ENCODE measurements at regions of chr4 and their contacts with region 1.

Region 1: DNA sequence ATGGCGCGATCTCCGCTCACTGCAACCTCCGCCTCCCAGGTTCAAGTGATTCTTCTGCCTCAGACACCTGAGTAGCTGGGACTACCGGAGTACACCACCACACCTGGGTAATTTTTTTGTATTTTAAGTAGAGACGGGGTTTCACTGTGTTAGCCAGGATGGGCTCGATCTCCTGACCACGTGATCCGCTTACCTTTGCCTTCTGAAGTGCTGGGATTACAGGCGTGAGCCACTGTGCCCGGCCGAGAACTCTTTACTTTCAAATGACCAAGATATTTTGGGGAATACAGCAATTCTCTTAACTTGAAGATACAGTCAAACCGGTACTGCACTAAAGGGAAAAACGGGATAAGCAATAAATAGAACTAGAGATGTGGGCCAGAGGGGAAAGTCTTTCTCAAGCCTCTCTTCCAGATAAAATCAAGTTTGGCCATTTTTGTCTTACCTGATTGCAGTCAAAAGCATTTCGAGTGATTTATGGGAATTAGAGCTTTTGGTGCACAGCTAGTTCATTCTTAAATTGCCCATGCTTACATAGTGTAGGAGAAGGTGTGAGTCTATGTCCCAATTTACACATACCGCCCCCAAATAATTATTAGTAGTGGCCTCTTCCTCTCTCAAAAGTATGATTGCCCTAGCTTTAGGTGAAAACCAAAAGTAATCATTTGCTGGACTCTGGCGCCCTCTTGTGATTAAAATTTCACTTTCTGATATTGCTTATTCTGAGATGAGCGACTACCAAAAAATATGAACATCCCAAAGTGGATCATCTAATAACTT is 53.2 kb upstream of the ABCG2 start:
- DNase-seq: no peak
- H3K4me3 ChIP-seq: no peak overlapping the region
- H3K27ac ChIP-seq: no peak overlapping the region
- H3K4me1 ChIP-seq: peaks cover 0 to 4% (median 0%) of the 10 kb centered on the region in 4 donors
- H3K27me3 ChIP-seq: no peaks in the 10 kb centered on the region
- CTCF ChIP-seq: peak; percentile 68 to 83

Region 2: GRCh38 chr4:87543835-87544461 is 667.7 kb before region 1 on chr4:
- intact Hi-C with region 1: loop called (anchors 10 kb)
- DNase-seq: peak in 1 of 2 donors; percentile 35
- H3K4me3 ChIP-seq: no peak overlapping the region
- H3K27ac ChIP-seq: no peak overlapping the region
- H3K4me1 ChIP-seq: peaks cover 0 to 40% (median 3%) of the 10 kb centered on the region in 4 donors
- H3K27me3 ChIP-seq: no peaks in the 10 kb centered on the region
- CTCF ChIP-seq: peak; percentile 70

Region 3: DNA sequence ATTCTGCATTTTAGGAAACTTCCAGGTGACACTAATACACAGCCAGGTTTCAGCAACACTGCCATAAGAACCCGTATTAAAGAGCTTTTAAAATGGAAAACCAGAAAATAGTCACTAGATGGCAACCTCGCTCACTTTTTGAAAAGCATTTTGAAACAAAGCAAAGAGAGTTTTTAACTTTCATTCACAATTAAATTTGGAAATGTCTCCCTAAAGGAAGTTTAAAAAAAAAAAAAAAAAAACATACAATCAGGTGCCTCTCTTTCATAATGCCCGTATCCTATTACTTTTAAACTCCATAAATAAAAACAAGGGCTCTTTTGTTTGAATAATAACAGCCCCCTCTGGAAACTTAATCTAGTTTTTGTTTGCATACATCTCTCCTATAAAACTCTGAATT is 358.6 kb before region 1 on chr4:
- intact Hi-C with region 1: loop called (anchors 2 kb)
- DNase-seq: no peak
- H3K4me3 ChIP-seq: no peak overlapping the region
- H3K27ac ChIP-seq: no peak overlapping the region
- H3K4me1 ChIP-seq: no peaks in the 10 kb centered on the region
- H3K27me3 ChIP-seq: no peaks in the 10 kb centered on the region
- CTCF ChIP-seq: peak; percentile 46 to 65

Region 4: DNA sequence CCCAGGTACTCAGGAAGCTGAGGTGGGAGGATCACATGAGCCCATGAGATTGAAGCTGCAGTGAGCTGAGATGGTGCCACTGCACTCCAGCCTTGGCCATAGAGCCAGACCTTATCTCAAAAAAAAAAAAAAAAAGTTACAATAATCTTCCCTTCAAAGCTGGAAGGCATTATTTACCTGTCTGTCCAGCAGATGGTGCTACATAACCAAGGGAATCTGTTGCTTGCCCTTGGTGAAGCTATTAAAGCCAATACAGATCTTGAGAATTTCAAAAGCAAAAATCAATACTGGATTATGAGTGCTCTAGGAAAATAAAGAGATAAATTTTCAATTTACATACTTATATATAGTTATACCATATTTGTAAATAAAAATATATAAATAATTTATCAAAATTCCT is 178.4 kb before region 1 on chr4:
- intact Hi-C with region 1: loop called (anchors 5 kb)
- DNase-seq: no peak
- H3K4me3 ChIP-seq: no peak overlapping the region
- H3K27ac ChIP-seq: no peak overlapping the region
- H3K4me1 ChIP-seq: peaks cover 0 to 9% (median 3%) of the 10 kb centered on the region in 4 donors
- H3K27me3 ChIP-seq: no peaks in the 10 kb centered on the region
- CTCF ChIP-seq: peak; percentile 48 to 55

Region 5: GRCh38 chr4:88456757-88457306 is 245.2 kb after region 1 on chr4 and contains the start of gene HERC5:
- intact Hi-C with region 1: loop called (anchors 5 kb)
- DNase-seq: peak; percentile 90 to 96
- H3K4me3 ChIP-seq: peak within 1 kb of the TSS; percentile 93 to 97
- H3K27ac ChIP-seq: peak within 1 kb of the TSS; percentile 88 to 90
- H3K4me1 ChIP-seq: peaks cover 0 to 5% (median 2%) of the 10 kb centered on the region in 4 donors
- H3K27me3 ChIP-seq: no peaks in the 10 kb centered on the region
- CTCF ChIP-seq: peak; percentile 61 to 67

Region 6: DNA sequence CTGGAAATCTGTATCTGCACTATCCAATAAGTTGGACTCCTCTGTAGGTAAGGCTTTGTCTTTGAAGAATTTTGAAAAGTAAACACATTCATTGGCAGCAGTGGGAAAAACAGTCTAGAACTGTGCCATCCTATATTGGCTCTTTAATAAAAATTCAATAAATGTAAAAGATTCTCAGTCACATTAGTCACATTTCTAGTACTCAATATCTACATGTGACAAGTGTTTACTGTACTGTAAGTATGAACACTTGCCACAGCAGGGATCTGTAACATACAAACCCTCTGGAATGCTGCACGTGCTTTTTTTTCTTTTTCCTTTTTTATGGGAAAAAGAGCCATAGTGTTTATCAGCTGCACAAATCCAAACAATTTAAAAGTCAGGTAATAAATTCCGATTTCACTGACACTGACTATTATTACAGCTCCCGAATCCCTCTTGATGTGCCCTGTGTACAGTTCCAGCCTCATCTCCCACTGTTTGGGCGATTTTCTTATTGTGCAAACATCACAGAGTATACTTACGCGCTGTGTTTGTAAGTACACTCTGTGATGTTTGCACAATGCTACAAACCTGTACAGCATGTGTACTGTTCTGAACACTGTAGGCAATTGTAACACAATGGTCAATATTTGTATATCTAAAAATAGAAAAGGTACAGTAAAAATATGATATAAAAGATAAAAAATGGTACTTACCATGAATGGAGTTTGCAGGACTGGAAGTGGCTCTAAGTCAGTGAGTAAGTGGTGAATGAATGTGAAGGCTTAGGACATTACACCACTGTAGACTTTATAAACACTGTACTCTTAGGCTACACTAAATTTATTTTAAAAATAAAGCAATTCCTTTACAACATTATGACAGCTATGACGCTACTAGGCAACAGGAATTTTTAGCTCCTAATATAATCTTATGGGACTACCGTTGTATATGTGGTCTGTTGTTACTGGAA is 303.2 kb after region 1 on chr4:
- intact Hi-C with region 1: loop called (anchors 5 kb)
- DNase-seq: no peak
- H3K4me3 ChIP-seq: no peak overlapping the region
- H3K27ac ChIP-seq: no peak overlapping the region
- H3K4me1 ChIP-seq: peaks cover 0 to 3% (median 1%) of the 10 kb centered on the region in 4 donors
- H3K27me3 ChIP-seq: no peaks in the 10 kb centered on the region
- CTCF ChIP-seq: no peak

Region 7: GRCh38 chr4:89110986-89111832 is 899.5 kb after region 1 on chr4 and contains the start of gene TIGD2:
- intact Hi-C with region 1: no loop called
- DNase-seq: peak; percentile 80 to 93
- H3K4me3 ChIP-seq: peak within 1 kb of the TSS; percentile 67 to 76
- H3K27ac ChIP-seq: peak within 1 kb of the TSS; percentile 76 to 79
- H3K4me1 ChIP-seq: peaks cover 0 to 20% (median 9%) of the 10 kb centered on the region in 4 donors
- H3K27me3 ChIP-seq: no peaks in the 10 kb centered on the region
- CTCF ChIP-seq: peak; percentile 81 to 86